Right ventricle myocardium superior (tissue), 1 donor: ENCODE measurements at regions of chr18 and their contacts with region 1.

Region 1: DNA sequence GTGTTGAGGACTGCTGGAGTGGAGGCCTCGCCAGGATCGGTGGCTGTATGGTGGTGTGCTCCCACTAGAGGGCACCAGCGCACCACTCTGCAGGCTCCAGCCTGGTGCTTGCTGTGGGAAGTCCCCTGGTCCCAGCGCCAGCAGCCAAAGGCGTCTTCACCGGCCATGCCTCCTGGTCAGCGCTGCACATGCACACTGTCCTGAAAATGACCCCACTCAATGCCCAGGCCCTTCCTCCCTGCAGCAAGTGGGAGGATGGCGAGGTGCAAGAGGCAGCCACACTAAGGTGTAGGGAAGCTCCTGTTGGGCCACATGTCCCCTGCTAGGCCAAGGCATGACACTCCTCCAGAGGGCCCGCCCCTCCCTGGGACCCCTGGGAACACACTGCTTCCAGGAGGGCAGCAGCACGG is 136.5 kb downstream of the CTIF start:
- DNase-seq: peak; percentile 92
- ATAC-seq: peak; percentile 94

Region 2: GRCh38 chr18:48781163-48781987 is 106.0 kb after region 1 on chr18:
- intact Hi-C with region 1: loop called (anchors 10 kb)
- DNase-seq: peak; percentile 94
- ATAC-seq: peak; percentile 77

Region 3: DNA sequence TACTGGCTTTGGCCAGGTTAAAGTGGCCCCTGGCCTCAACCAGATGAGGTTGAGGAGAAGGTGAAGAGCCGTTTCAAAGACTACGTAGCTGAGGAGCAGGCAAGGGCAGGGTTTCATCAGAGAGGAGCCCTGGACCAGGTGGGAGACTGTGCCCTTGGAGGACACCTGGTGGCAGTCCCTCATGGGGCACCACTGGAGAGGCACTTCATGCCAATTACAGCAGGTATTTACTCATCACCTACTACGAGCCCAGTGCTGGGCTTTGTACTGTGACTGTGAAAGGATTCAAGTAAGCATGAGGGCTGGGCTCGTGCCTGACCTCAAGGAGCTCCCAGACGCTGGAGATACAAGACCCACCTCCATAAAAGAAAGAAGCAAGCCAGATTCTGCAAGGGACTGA is 237.8 kb after region 1 on chr18:
- intact Hi-C with region 1: no loop called
- DNase-seq: no peak
- ATAC-seq: no peak

Region 4: DNA sequence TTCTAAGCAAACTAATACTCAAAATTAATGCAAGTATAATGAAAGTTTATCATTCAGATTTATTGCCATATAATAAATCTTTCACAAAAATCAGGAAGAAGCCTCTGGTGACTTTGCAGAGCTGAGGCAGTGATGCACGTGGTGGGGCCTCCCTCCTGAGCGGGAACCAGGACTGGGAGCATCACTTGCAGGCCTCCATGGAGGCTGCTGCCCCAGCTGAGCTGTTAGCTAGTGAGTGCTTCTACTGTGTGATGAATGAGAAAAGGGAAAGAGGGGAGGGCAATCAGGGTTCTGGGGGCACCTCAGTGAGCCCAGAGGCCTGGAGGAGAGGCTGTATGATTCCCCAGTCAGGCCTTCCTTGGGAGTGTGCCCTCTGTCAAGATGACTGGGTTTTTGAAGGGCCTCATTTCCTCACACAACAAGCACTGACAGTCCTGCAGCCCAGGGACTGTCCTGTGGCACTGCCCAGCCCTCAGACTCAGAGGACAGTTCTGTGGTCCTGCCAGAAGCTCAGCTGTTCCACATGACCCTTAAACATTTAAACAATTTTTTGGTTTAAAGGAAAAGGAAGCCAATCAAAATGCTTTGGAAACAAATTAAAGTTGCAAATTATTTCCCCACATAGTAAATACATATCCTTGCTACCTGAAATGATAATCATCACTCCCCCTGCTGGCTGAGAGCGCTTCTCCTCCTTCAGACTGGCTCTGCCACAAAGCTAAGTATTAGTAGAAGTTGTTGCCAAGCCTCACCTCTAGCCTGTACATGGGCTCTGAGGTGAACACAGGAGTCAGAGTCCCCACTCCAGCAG is 366.3 kb after region 1 on chr18:
- intact Hi-C with region 1: loop called (anchors 5 kb)
- DNase-seq: no peak
- ATAC-seq: peak; percentile 88

Region 5: DNA sequence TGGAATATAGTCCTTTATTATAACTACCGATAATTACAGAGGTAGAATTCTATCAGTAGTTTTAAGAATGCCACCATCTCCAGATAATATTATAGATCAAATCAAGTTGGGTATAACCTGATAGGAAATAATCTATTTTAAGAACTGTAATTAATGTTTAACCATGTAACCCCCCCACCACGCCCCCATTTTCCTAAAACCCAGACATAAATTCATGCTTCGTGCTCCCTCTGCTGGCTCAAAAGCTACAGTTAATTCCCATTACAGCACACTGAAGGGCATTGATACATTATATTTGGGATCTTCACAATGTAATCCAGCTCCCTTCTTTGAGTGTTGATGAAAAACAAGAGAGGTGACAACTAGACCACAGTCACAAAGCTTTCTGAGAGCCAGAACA is 503.4 kb after region 1 on chr18:
- intact Hi-C with region 1: loop called (anchors 5 kb)
- DNase-seq: no peak
- ATAC-seq: no peak

Region 6: GRCh38 chr18:49249521-49249920 is 574.2 kb after region 1 on chr18:
- intact Hi-C with region 1: loop called (anchors 10 kb)
- DNase-seq: no peak
- ATAC-seq: peak; percentile 65

Region 7: GRCh38 chr18:49447810-49448745 is 772.7 kb after region 1 on chr18:
- intact Hi-C with region 1: loop called (anchors 2 kb)
- DNase-seq: no peak
- ATAC-seq: peak; percentile 83